ENCODE measurements at regions of chr19 and their contacts with region 1.

Region 1: GRCh38 chr19:40598121-40598917 is 2.9 kb upstream of the LTBP4 start:
- DNase-seq: peak; percentile 84 to 93
- ATAC-seq: peak; percentile 81 to 88 (median 84)
- H3K4me3 ChIP-seq: peak overlapping the region; percentile 11
- H3K27ac ChIP-seq: no peak overlapping the region
- H3K4me1 ChIP-seq: peaks cover 18% of the 10 kb centered on the region
- H3K27me3 ChIP-seq: peaks cover 0 to 45% (median 11%) of the 10 kb centered on the region in 3 donors
- CTCF ChIP-seq: peak; percentile 98

Region 2: GRCh38 chr19:40104754-40105153 is 493.6 kb before region 1 on chr19:
- intact Hi-C with region 1: no loop called
- DNase-seq: no peak
- ATAC-seq: no peak
- H3K4me3 ChIP-seq: no peak overlapping the region
- H3K27ac ChIP-seq: no peak overlapping the region
- H3K4me1 ChIP-seq: no peaks in the 10 kb centered on the region
- H3K27me3 ChIP-seq: no peaks in the 10 kb centered on the region
- CTCF ChIP-seq: no peak

Region 3: GRCh38 chr19:40305403-40305802 is 292.9 kb before region 1 on chr19:
- intact Hi-C with region 1: loop called (anchors 2 to 10 kb)
- DNase-seq: peak; percentile 75 to 86
- ATAC-seq: peak; percentile 63 to 91 (median 84)
- H3K4me3 ChIP-seq: no peak overlapping the region
- H3K27ac ChIP-seq: no peak overlapping the region
- H3K4me1 ChIP-seq: no peaks in the 10 kb centered on the region
- H3K27me3 ChIP-seq: no peaks in the 10 kb centered on the region
- CTCF ChIP-seq: peak; percentile 70

Region 4: DNA sequence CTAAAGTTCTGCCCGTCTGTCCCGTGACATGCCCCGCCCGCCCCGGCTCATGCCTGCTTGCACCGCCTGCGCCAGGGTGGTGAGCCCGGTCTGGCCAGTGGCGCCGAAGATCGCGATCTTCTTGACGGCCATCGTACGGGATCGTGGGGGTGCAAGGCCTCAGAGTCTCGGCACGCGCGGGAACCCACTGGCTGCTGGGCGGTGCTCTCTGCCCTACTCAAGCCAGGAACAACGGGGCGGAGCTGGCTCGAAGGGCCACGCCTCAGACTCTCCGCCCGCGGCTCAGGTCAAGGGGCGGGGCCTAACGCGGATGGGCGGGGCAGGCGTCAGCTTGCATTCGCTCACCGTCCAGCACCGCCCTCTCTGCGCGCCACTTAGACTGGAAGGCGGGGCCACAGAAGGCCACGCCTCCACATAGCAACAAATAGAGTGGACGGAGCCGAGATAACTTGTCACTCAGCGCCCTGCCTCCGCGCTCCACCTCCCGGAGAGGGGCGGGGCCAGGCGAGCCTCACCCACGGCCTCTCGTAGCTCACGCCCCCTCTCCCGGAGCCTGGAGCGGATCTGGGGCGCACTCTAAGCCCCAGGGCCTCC is 132.7 kb before region 1 on chr19 and contains the start of gene BLVRB:
- intact Hi-C with region 1: loop called in 1 of 2 experiments (anchors 5 kb)
- DNase-seq: peak; percentile 100
- ATAC-seq: peak; percentile 90 to 94 (median 92)
- H3K4me3 ChIP-seq: peak within 1 kb of the TSS; percentile 85
- H3K27ac ChIP-seq: peak within 1 kb of the TSS; percentile 94
- H3K4me1 ChIP-seq: peaks cover 12% of the 10 kb centered on the region
- H3K27me3 ChIP-seq: no peaks in the 10 kb centered on the region
- CTCF ChIP-seq: no peak
- total RNA-seq, gene BLVRB: 74.1 to 189 (median 114) TPM

Region 5: DNA sequence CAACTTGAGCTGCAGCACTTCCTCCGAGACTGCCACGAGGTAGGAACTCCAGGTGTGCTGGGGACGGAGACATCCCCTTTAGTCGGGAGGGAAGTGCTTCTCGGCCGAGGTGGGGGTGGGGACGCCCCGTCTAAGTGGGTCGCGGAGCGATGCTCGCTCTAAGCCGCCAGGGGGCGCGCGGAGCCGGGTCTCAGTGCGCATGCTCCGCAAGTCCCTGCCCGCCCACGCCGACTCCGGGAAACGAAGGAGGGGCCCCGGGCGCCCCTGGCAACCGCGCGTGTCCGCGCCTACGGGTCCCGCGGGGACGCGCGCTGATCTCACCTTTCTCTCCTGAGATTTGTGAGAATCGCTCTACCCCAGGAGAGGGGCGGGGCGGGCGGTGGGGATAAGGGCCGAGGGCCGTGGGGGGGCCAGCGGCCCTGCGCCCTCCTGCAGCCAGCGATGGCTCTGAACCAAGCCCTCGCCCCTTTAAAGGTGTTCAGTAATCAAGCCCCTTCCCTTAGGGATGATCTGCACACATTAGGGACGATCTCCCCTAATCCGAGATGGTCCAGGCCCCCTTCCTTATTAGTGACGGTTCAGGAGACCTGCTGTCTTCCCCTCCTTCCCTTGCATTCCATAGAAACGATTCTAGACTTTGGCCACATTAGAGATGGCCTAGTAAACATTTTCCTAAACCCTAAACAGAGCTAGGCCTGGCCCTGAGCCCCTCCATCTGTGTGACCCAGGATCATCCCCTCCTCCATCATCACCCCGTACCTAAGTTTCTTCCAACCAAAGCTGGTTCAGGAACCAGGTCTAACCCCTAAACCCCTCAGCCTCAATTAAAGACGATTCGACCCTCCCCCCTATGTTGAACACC is 69.0 kb before region 1 on chr19:
- intact Hi-C with region 1: loop called (anchors 5 kb)
- DNase-seq: peak; percentile 85 to 91
- ATAC-seq: peak; percentile 91 to 96 (median 93)
- H3K4me3 ChIP-seq: peak overlapping the region; percentile 70
- H3K27ac ChIP-seq: no peak overlapping the region
- H3K4me1 ChIP-seq: no peaks in the 10 kb centered on the region
- H3K27me3 ChIP-seq: no peaks in the 10 kb centered on the region
- CTCF ChIP-seq: peak; percentile 94

Region 6: DNA sequence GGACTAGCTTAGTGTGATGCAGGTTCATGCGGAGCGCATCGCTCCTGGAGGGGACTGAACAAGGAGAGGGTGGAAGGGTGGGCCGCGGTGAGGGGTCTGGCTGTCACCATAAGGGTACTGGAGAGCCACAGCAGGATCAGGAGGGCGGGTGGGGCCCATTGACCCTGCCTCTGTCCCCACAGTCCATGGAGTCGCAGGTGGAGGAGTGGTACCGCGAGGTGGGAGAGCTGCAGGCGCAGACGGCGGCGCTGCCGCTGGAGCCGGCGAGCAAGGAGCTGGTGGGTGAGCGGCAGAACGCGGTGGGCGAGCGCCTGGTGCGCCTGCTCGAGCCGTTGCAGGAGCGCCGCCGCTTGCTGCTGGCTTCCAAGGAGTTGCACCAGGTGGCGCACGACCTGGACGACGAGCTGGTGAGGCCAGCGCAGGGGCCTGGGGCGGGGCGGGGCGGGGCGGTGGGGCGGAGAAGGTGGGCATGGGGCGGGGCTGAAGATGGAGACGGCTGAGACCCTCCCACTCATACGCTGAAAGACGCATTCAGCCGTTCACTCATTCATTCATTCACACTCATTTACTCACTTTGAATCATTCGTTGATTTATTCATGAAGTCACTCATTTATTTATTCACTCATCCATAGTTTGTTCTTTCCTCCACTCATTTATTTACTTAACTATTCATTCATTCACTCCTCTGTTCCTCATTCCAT is 49.2 kb before region 1 on chr19:
- intact Hi-C with region 1: loop called (anchors 5 kb)
- DNase-seq: peak; percentile 55 to 77
- ATAC-seq: peak; percentile 30 to 80 (median 71)
- H3K4me3 ChIP-seq: no peak overlapping the region
- H3K27ac ChIP-seq: no peak overlapping the region
- H3K4me1 ChIP-seq: no peaks in the 10 kb centered on the region
- H3K27me3 ChIP-seq: peaks cover 0 to 21% (median 5%) of the 10 kb centered on the region in 3 donors
- CTCF ChIP-seq: peak; percentile 33

Region 7: GRCh38 chr19:40553885-40554857 is 44.1 kb before region 1 on chr19:
- intact Hi-C with region 1: loop called (anchors 5 kb)
- DNase-seq: no peak
- ATAC-seq: no peak
- H3K4me3 ChIP-seq: no peak overlapping the region
- H3K27ac ChIP-seq: no peak overlapping the region
- H3K4me1 ChIP-seq: no peaks in the 10 kb centered on the region
- H3K27me3 ChIP-seq: peaks cover 0 to 26% (median 6%) of the 10 kb centered on the region in 3 donors
- CTCF ChIP-seq: no peak

Region 8: DNA sequence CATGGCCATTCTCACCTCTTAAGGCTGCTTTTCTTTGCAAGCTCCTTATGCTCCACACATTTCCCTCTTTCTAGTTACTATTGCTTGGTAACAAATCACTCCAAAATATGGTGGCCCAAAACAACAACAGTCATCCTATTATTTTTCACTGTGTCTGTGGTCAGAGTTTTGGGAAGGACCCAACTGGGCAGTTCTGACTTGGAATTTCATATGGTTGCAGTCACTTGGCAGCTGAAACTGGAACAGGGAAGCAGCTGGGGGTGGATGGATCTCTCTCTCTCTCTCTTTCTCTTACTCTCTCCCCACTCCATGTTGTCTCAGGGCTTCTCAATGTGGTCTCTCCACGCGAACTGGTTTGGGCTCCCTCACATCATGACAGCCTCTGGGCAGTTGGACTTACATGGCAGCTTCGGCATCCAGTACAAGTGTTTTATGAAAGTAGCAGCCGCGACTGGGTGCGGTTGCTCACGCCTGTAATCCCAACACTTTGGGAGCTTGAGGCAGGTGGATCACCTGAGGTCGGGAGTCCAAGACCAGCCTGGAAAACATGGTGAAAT is 52.5 kb after region 1 on chr19:
- intact Hi-C with region 1: no loop called
- DNase-seq: peak; percentile 47 to 56
- ATAC-seq: peak; percentile 31 to 60 (median 58)
- H3K4me3 ChIP-seq: no peak overlapping the region
- H3K27ac ChIP-seq: peak overlapping the region; percentile 7
- H3K4me1 ChIP-seq: peaks cover 17% of the 10 kb centered on the region
- H3K27me3 ChIP-seq: no peaks in the 10 kb centered on the region
- CTCF ChIP-seq: no peak

Measured in psoas muscle (tissue), 8 donors.